GM12878 (cell line): ENCODE measurements at regions of chr5 and their contacts with region 1.

Region 1: GRCh38 chr5:162334944-162335343 is 267.4 kb downstream of the GABRG2 start:
- DNase-seq: no peak
- ATAC-seq: peak; percentile 62
- H3K4me3 ChIP-seq: no peak overlapping the region
- H3K27ac ChIP-seq: no peak overlapping the region
- H3K4me1 ChIP-seq: no peaks in the 10 kb centered on the region
- H3K27me3 ChIP-seq: no peaks in the 10 kb centered on the region
- CTCF ChIP-seq: no peak
- EP300 ChIP-seq: no peak
- POLR2A ChIP-seq: no peak
- RAD21 ChIP-seq: no peak

Region 2: DNA sequence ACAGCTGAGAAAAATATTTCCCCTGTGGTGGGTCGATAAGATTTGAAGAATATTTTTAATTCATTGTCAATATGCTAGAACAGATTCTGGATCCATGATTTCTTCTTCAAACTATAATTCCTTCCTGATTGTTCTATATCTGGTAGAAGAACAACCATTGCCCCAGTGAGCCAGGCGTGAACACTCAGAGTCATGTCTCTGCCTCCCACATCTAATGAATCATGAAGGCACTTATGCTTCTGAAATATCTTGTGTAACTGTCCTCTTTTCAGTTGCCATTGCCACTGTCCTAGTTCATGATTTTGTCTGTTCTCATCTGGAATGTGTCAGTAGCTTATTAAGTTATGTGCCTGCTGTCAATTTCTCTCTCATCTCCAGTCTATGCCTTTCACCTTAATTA is 227.4 kb before region 1 on chr5:
- CTCF ChIA-PET with region 1: no interaction called
- POLR2A ChIA-PET with region 1: no interaction called
- RAD21 ChIA-PET with region 1: no interaction called
- SMC1A ChIA-PET with region 1: no interaction called
- in situ Hi-C with region 1: no loop called
- intact Hi-C with region 1: no loop called
- DNase-seq: no peak
- ATAC-seq: no peak
- H3K4me3 ChIP-seq: no peak overlapping the region
- H3K27ac ChIP-seq: no peak overlapping the region
- H3K4me1 ChIP-seq: no peaks in the 10 kb centered on the region
- H3K27me3 ChIP-seq: no peaks in the 10 kb centered on the region
- CTCF ChIP-seq: no peak
- EP300 ChIP-seq: no peak
- POLR2A ChIP-seq: no peak
- RAD21 ChIP-seq: no peak

Region 3: DNA sequence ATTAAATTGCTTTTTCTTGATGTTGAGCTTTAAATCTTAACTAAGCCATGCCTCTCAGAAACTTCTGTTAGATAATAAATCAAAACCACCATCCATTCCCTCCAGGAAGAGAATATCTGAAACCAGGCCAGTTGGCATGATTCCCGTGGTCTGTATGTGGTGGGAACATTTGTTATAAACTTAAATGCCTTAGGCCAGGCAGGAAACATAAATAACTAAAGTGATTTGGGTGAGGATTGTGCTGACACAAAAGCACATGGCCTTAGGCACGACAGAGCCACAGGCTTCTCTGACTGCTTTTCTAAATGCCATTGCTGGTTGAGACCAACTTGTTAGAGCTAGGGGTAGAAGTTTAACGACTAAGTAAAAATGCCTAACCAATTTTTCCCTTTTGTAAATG is 11.5 kb before region 1 on chr5:
- CTCF ChIA-PET with region 1: interaction called, 5 read pairs
- POLR2A ChIA-PET with region 1: no interaction called
- RAD21 ChIA-PET with region 1: no interaction called
- SMC1A ChIA-PET with region 1: interaction called, 34 read pairs
- in situ Hi-C with region 1: no loop called
- intact Hi-C with region 1: no loop called
- DNase-seq: no peak
- ATAC-seq: no peak
- H3K4me3 ChIP-seq: no peak overlapping the region
- H3K27ac ChIP-seq: no peak overlapping the region
- H3K4me1 ChIP-seq: no peaks in the 10 kb centered on the region
- H3K27me3 ChIP-seq: no peaks in the 10 kb centered on the region
- CTCF ChIP-seq: no peak
- EP300 ChIP-seq: no peak
- POLR2A ChIP-seq: no peak
- RAD21 ChIP-seq: no peak